ENCODE measurements at regions of chr6 and their contacts with region 1.

Region 1: GRCh38 chr6:153511896-153512496 is 380.9 kb upstream of the RGS17 start:
- DNase-seq: peak in 1 of 2 donors; percentile 10
- H3K4me3 ChIP-seq: no peak overlapping the region
- H3K27ac ChIP-seq: no peak overlapping the region
- H3K4me1 ChIP-seq: peaks cover 0 to 4% of the 10 kb centered on the region in 2 donors
- H3K27me3 ChIP-seq: no peaks in the 10 kb centered on the region
- CTCF ChIP-seq: peak; percentile 17 to 64 (median 60)
- POLR2A ChIP-seq: no peak

Region 2: DNA sequence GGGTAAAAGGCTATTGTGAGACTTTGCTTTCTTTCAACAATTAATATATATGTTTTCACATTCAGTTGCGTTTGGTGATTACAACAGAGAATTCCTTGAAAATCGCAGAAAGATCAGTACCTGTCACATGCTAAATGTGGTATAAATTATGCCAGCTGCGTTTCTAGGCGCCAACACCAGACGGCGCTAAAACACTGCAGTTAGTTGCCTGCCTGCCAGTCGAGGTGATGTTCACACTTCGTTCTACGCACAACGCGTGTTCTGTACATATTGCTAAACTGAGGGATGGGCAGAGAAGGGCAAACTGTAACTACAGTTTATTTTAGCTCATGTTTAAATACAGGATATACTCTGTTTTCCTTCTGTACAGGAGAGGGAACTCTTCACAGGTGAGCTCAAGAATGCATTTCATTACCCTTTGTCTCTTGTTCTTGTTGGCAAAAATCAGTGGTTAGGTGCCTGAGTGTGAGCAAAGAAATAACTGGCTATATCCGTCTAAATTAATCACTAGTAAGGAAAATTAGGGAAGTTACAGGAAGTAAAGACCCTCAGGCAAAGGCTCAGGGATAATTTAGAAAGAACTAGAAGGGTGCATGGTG is 280.8 kb before region 1 on chr6:
- intact Hi-C with region 1: loop called (anchors 10 kb)
- DNase-seq: peak; percentile 85 to 88
- H3K4me3 ChIP-seq: no peak overlapping the region
- H3K27ac ChIP-seq: no peak overlapping the region
- H3K4me1 ChIP-seq: peaks cover 12 to 14% of the 10 kb centered on the region in 2 donors
- H3K27me3 ChIP-seq: no peaks in the 10 kb centered on the region
- CTCF ChIP-seq: peak; percentile 85 to 100 (median 96)
- POLR2A ChIP-seq: no peak

Region 3: DNA sequence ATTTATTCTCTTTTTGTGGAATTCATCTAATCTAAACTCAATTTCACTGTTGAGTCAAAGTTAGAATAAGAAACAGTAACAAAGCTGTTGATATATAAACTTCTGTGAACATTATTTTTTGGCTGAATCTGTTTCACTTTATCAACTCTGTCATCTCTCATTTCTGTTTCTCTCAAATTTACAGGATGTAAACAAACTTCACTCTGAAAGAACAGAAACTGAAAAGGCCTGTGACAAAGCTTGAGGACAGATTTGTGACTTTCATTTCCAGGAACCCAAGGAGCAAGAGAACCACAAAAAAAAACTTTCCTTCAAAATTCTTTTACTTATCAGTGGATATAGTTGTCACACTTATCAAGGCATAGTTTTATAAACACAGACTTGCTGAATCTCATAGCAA is 79.2 kb after region 1 on chr6:
- intact Hi-C with region 1: no loop called
- DNase-seq: no peak
- H3K4me3 ChIP-seq: no peak overlapping the region
- H3K27ac ChIP-seq: no peak overlapping the region
- H3K4me1 ChIP-seq: no peaks in the 10 kb centered on the region
- H3K27me3 ChIP-seq: no peaks in the 10 kb centered on the region
- CTCF ChIP-seq: no peak
- POLR2A ChIP-seq: no peak

Measured in thyroid gland (tissue), 4 donors.